ENCODE measurements at regions of chr2 and their contacts with region 1.

Region 1: GRCh38 chr2:143205106-143205764 is 76.0 kb downstream of the ARHGAP15 start:
- DNase-seq: peak; percentile 42 to 69 (median 64)
- H3K4me3 ChIP-seq: no peak overlapping the region
- H3K27ac ChIP-seq: no peak overlapping the region
- H3K4me1 ChIP-seq: peaks cover 0 to 11% (median 0%) of the 10 kb centered on the region in 4 experiments
- H3K27me3 ChIP-seq: no peaks in the 10 kb centered on the region

Region 2: DNA sequence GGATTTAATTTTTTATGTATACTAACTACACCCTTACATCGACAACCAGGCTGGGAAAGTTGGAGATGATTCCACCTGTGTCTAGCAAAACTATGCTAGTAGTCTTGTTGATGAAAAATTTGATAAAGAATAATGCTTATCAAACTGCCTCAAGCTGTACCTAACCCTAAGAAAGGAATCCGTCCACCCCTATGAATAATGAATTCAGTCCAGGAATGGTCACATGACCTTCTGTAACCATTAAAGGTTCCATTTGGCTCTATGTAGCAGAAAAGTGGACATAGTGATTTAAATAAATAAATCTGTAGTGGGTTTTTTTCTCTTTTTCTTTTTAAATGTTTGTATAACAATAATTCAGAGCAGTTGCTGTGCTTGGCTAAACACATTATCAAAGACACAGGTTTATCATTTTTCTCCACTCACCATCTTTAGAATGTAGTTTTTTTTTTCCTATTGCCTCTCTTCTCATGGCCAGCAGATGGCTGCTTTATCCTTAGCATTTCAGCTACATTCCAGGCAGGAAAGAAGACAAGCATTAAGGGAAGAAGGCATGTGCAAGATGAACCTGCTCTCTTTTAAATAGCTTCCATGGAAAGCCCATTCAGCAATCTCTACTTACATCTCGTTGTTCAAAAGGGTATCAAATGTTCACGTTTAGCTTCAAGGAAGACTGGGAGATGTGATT is 33.6 kb before region 1 on chr2:
- CTCF ChIA-PET with region 1: interaction called, 15 read pairs
- POLR2A ChIA-PET with region 1: no interaction called
- DNase-seq: no peak
- H3K4me3 ChIP-seq: no peak overlapping the region
- H3K27ac ChIP-seq: no peak overlapping the region
- H3K4me1 ChIP-seq: peaks cover 6 to 18% (median 10%) of the 10 kb centered on the region in 4 experiments
- H3K27me3 ChIP-seq: no peaks in the 10 kb centered on the region

Region 3: DNA sequence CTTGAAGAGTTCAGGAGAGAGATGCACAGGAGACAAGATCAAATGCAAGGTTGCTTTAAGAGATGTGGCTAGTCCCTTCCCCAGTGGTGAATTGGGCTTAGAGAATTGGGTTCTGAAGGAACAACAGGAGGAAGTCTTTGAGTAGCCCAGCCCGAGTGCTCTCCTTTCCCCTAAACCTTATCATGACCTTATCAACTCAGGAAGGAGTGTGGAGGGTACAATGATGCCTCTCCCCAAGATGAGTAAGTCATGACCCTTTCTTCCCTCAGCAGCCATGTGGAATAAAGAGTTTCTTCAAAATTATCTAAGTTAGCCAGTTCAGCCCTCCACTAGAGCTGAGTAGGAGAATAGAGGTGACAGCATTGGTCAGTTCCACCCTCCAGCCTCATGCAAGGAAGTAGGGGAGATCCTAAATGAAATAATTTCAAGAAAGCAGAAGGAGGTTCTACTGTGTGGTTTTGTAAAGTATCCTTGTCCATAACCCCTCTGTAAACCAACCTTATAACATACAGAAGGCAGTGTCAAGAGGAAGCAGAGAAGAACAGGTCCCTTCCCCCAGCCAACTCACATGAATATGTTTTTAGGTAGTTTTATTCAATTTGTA is 12.4 kb after region 1 on chr2:
- CTCF ChIA-PET with region 1: interaction called, 13 read pairs
- POLR2A ChIA-PET with region 1: no interaction called
- DNase-seq: peak in 2 of 3 donors; percentile 48 to 54
- H3K4me3 ChIP-seq: no peak overlapping the region
- H3K27ac ChIP-seq: no peak overlapping the region
- H3K4me1 ChIP-seq: peaks cover 0 to 13% (median 7%) of the 10 kb centered on the region in 4 experiments
- H3K27me3 ChIP-seq: no peaks in the 10 kb centered on the region

Region 4: GRCh38 chr2:143225931-143226330 is 20.7 kb after region 1 on chr2:
- CTCF ChIA-PET with region 1: interaction called, 13 read pairs
- POLR2A ChIA-PET with region 1: no interaction called
- DNase-seq: no peak
- H3K4me3 ChIP-seq: no peak overlapping the region
- H3K27ac ChIP-seq: no peak overlapping the region
- H3K4me1 ChIP-seq: no peaks in the 10 kb centered on the region
- H3K27me3 ChIP-seq: no peaks in the 10 kb centered on the region

Measured in common myeloid progenitor, CD34-positive (primary cell).